HEK293 (cell line): ENCODE measurements at regions of chr11 and their contacts with region 1.

Region 1: GRCh38 chr11:44621140-44621681 is 55.7 kb downstream of the CD82 start:
- H3K4me3 ChIP-seq: no peak overlapping the region
- H3K27ac ChIP-seq: no peak overlapping the region
- H3K4me1 ChIP-seq: no peaks in the 10 kb centered on the region
- CTCF ChIP-seq: peak; percentile 79

Region 2: DNA sequence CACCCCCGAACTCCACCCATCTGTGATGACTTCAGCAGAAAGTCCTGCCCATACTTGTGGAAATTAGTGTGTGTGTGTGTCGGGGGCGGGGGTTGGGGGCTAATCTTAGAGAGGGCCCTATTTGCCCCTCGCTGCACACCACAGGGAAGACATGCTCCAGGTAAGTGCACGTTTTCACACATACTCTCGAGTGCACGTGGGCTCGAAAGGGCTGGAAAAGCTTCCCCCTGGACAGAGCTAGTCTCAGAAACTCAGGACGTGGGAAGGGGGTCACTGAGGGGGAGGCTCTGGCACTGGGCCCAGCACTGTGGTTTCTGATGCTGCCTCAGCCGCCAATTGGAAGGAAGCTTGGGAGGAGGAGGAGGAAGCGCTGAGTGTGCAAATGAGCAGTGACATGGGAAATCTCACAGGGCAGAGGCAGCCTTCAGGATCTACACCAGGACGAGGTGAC is 96.4 kb before region 1 on chr11:
- CTCF ChIA-PET with region 1: interaction called, 10 read pairs
- POLR2A ChIA-PET with region 1: no interaction called
- H3K4me3 ChIP-seq: no peak overlapping the region
- H3K27ac ChIP-seq: no peak overlapping the region
- H3K4me1 ChIP-seq: no peaks in the 10 kb centered on the region
- CTCF ChIP-seq: no peak

Region 3: DNA sequence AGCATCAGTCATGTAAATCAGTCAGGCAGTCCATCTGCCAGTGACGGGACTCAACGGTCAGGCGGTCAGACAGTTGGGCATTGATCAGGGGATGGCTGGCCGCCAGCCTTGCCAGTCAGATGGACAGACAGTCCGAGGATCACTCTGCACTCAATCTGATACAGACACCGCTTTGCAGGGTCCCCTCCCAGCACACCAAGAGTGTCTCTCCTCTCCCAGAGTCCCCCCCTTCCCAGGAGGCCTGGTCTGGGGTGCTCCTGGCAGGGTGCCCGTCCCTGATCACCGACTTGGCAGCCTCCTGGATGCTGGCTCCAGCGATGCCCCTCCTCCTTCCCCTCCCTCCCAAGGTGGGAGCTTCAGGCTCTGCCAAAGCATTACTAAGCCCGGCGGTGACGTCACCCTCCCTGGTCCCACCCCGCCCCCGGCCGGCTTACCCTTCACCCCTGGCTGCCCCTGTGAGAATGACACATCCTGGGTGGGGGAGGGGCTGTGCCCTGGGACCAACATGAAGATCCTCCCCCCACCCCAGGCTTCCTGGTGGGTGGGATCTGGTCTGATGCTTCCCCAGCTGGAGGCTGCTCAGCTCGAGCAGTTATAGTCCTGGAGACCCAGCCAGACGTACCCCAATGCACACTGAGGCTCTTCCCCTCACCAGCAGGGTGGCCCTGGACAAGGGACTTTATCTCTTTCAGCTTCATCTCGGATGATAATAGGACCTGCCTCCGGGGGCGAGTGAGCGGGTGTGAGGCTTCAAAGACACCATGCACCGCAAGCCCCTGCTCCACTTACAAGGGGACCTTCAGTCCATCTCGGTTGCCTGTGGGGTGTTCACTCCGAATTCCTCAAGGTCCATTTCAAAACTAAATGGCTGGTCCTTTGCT is 13.4 kb after region 1 on chr11:
- CTCF ChIA-PET with region 1: interaction called, 13 read pairs
- POLR2A ChIA-PET with region 1: no interaction called
- H3K4me3 ChIP-seq: no peak overlapping the region
- H3K27ac ChIP-seq: no peak overlapping the region
- H3K4me1 ChIP-seq: no peaks in the 10 kb centered on the region
- CTCF ChIP-seq: no peak

Region 4: GRCh38 chr11:44893846-44894617 is 272.8 kb after region 1 on chr11:
- CTCF ChIA-PET with region 1: interaction called, 58 read pairs
- POLR2A ChIA-PET with region 1: interaction called, 3 read pairs
- H3K4me3 ChIP-seq: no peak overlapping the region
- H3K27ac ChIP-seq: no peak overlapping the region
- H3K4me1 ChIP-seq: no peaks in the 10 kb centered on the region
- CTCF ChIP-seq: peak; percentile 76

Region 5: DNA sequence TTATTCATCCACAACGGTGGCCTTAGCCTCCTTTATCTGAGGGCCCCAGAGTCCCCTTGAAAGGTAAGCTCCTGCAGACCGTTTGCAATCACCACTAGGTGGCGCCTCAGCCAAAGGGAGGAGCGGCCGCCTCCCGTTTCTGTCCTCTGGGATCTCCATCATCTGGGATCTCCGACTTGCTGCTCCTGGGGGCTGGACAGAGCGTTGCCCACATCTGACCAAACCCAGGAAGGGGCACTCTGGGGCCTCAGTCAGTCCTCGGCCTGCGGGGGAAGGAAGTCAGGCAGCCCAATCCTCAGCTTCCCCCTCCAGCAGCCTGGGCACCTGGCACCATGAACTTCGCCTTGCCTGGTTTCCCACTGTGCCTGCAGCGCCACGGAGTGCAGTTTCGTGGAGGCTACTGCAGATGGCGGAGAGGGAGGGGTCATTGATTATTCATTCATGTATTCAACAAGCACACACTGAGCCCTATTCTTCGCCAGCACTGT is 306.0 kb after region 1 on chr11:
- CTCF ChIA-PET with region 1: interaction called, 11 read pairs
- POLR2A ChIA-PET with region 1: no interaction called
- H3K4me3 ChIP-seq: no peak overlapping the region
- H3K27ac ChIP-seq: no peak overlapping the region
- H3K4me1 ChIP-seq: no peaks in the 10 kb centered on the region
- CTCF ChIP-seq: peak; percentile 70